ENCODE measurements at regions of chr19 and their contacts with region 1.

Region 1: GRCh38 chr19:39347332-39348164 is 5.3 kb downstream of the SAMD4B start:
- DNase-seq: no peak
- ATAC-seq: no peak
- H3K4me3 ChIP-seq: no peak overlapping the region
- H3K27ac ChIP-seq: no peak overlapping the region
- H3K4me1 ChIP-seq: peaks cover 0 to 66% (median 40%) of the 10 kb centered on the region in 12 donors
- H3K27me3 ChIP-seq: no peaks in the 10 kb centered on the region
- CTCF ChIP-seq: no peak
- POLR2A ChIP-seq: no peak

Region 2: GRCh38 chr19:38942471-38943181 is 404.9 kb before region 1 on chr19:
- intact Hi-C with region 1: no loop called
- DNase-seq: no peak
- ATAC-seq: peak in 1 of 4 donors; percentile 20
- H3K4me3 ChIP-seq: no peak overlapping the region
- H3K27ac ChIP-seq: no peak overlapping the region
- H3K4me1 ChIP-seq: no peaks in the 10 kb centered on the region
- H3K27me3 ChIP-seq: no peaks in the 10 kb centered on the region
- CTCF ChIP-seq: no peak
- POLR2A ChIP-seq: no peak

Region 3: DNA sequence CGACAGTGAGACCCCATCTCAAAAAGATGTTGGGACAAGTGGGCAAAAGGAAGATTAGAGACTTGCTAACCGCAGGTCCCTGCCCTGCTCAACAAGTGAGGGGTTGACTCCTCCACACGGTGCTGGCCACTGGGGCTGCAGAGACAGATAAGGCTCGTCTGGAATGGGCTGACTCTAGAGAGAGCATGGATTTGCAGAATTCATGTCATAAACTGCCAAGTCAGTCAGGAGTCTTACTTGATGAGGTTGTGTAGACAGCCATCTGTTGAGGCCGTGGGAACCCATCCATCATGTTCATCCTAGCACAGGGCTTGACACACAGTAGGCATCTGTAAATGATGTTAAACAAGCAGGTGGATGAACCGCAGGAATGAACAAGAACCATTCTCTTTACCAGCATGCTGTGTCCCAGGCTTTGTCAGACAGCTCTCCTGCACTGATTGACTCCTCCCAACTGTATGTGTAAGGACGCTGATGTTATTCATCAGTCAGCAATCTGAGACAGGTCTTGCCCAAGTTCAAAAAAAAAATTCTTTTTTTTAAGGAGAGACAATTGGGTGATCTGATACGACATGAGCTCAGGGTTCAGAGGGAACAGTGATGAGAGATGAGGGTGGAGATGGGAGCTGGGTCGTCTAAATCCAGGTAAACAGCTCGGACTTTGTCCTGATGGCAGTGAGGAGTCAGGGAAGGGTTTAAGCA is 34.5 kb after region 1 on chr19:
- intact Hi-C with region 1: loop called in 1 of 10 experiments (anchors 5 kb)
- DNase-seq: no peak
- ATAC-seq: no peak
- H3K4me3 ChIP-seq: no peak overlapping the region
- H3K27ac ChIP-seq: no peak overlapping the region
- H3K4me1 ChIP-seq: no peaks in the 10 kb centered on the region
- H3K27me3 ChIP-seq: no peaks in the 10 kb centered on the region
- CTCF ChIP-seq: no peak
- POLR2A ChIP-seq: no peak